ENCODE measurements at regions of chr5 and their contacts with region 1.

Region 1: GRCh38 chr5:180179442-180180420 is 29.3 kb downstream of the RASGEF1C start:
- DNase-seq: no peak
- H3K4me3 ChIP-seq: no peak overlapping the region
- H3K27ac ChIP-seq: no peak overlapping the region
- H3K4me1 ChIP-seq: no peaks in the 10 kb centered on the region
- H3K27me3 ChIP-seq: peaks cover 3% of the 10 kb centered on the region; the same call in 1 of the 2 replicates
- CTCF ChIP-seq: no peak

Region 2: DNA sequence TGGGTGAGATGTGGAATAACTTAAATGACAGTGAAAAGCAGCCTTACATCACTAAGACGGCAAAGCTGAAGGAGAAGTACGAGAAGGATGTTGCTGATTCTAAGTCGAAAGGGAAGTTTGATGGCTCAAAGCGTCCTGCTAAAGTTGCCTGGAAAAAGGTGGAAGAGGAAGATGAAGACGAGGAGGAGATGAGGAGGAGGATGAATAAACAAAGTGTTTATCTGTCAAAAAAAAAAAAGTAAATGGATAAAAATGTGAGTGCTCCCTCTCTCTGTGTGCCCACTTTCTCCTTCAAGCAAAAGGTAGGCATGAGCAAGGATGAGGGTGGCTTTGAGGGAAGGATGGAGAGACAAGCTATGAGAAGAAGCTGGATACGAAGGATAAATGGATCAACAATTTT is 485.2 kb before region 1 on chr5:
- CTCF ChIA-PET with region 1: no interaction called
- POLR2A ChIA-PET with region 1: no interaction called
- intact Hi-C with region 1: no loop called
- DNase-seq: no peak
- H3K4me3 ChIP-seq: no peak overlapping the region
- H3K27ac ChIP-seq: no peak overlapping the region
- H3K4me1 ChIP-seq: peaks cover 16% of the 10 kb centered on the region
- H3K27me3 ChIP-seq: no peaks in the 10 kb centered on the region
- CTCF ChIP-seq: no peak

Region 3: GRCh38 chr5:180718810-180719453 is 539.2 kb after region 1 on chr5:
- CTCF ChIA-PET with region 1: interaction called, 7 read pairs
- POLR2A ChIA-PET with region 1: no interaction called
- intact Hi-C with region 1: loop called (anchors 5 kb)
- DNase-seq: peak in 1 of 2 experiments; percentile 20
- H3K4me3 ChIP-seq: no peak overlapping the region
- H3K27ac ChIP-seq: no peak overlapping the region
- H3K4me1 ChIP-seq: no peaks in the 10 kb centered on the region
- H3K27me3 ChIP-seq: peaks cover 77% of the 10 kb centered on the region
- CTCF ChIP-seq: peak; percentile 76

Measured in PC-9 (cell line).